SK-N-SH (cell line): ENCODE measurements at regions of chr19 and their contacts with region 1.

Region 1: GRCh38 chr19:8158411-8159074 is 9.2 kb upstream of the FBN3 start:
- DNase-seq: peak; percentile 78
- H3K4me3 ChIP-seq: no peak overlapping the region; a peak in 1 of 4 replicates
- H3K27ac ChIP-seq: no peak overlapping the region
- H3K4me1 ChIP-seq: peaks cover 3 to 7% of the 10 kb centered on the region in 2 experiments; a peak in 2 of 4 replicates
- H3K27me3 ChIP-seq: no peaks in the 10 kb centered on the region; the same call in 1 of the 2 replicates
- CTCF ChIP-seq: peak; percentile 68
- EP300 ChIP-seq: no peak
- RAD21 ChIP-seq: peak; percentile 96

Region 2: DNA sequence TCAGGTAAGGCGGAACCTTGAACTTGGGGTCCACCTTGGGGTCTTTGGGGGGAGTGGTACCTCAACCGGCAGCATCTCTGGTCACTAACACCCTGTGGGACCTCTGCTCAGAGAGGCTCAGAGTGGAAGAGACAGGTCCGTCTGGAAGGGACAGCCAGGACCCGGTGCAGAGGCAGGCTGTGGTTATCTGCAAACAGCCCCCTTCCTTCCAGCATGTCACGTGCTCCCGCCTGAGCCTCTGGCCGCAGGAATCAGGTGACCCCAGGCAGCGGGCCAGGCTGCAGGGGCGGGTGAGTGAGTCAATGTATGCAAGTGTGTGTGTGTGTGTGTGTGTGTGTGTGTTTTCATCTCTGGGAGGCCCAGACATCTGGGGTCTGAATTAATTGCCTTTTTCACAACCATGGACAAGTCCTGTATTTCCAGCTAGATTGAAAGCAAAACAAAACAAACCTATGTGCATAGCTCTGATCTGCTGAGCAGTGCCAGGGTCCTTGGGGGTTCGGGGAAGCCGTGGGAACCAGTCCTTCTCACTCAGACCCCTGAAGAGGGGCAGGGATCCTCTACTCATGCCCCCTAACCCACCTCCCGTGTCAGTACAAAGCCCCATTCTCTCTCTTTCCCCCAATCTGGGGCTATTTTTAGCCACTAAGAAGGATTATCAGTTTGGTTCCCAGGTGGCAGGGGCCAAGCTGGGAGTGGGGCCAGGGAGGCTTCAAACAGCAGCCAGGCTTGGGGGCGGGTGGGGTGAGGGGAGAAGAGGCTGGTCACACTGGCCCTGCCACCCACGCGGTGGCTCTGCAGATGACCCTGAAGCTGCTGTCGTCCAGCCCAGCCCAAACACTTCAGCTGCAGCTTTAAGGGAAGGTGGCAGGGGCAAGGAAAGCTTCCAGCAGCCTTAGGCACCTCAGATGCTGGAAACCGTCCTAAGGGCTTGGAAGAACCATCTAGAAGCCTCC is 82.0 kb after region 1 on chr19:
- CTCF ChIA-PET with region 1: interaction called, 16 read pairs
- POLR2A ChIA-PET with region 1: no interaction called
- DNase-seq: peak; percentile 93
- H3K4me3 ChIP-seq: no peak overlapping the region
- H3K27ac ChIP-seq: peak overlapping the region; percentile 14 to 91; a peak in 2 of 4 replicates
- H3K4me1 ChIP-seq: peaks cover 4 to 18% of the 10 kb centered on the region in 2 experiments; a peak in 2 of 4 replicates
- H3K27me3 ChIP-seq: no peaks in the 10 kb centered on the region
- CTCF ChIP-seq: no peak
- EP300 ChIP-seq: peak; percentile 12 to 78; a peak in 3 of 4 replicates
- RAD21 ChIP-seq: 0 out of 2 replicates have a peak, but pooled peaks have one; percentile 20